ENCODE measurements at regions of chr19 and their contacts with region 1.

Region 1: GRCh38 chr19:34974646-34975045 is 10.6 kb upstream of the ZNF792 start:
- DNase-seq: no peak
- ATAC-seq: no peak
- H3K4me3 ChIP-seq: no peak overlapping the region
- H3K4me3 Mint-ChIP-seq: peak overlapping the region in 4 of 10 donors; percentile 29 to 91 (median 38)
- H3K27ac ChIP-seq: no peak overlapping the region
- H3K27ac Mint-ChIP-seq: peak overlapping the region in 4 of 9 donors; percentile 23 to 86 (median 78)
- H3K4me1 ChIP-seq: peaks cover 8 to 9% of the 10 kb centered on the region in 2 donors
- H3K4me1 Mint-ChIP-seq: peaks cover 11 to 35% (median 26%) of the 10 kb centered on the region in 7 donors
- H3K27me3 ChIP-seq: no peaks in the 10 kb centered on the region
- H3K27me3 Mint-ChIP-seq: peaks cover 0 to 7% (median 0%) of the 10 kb centered on the region in 5 donors

Region 2: DNA sequence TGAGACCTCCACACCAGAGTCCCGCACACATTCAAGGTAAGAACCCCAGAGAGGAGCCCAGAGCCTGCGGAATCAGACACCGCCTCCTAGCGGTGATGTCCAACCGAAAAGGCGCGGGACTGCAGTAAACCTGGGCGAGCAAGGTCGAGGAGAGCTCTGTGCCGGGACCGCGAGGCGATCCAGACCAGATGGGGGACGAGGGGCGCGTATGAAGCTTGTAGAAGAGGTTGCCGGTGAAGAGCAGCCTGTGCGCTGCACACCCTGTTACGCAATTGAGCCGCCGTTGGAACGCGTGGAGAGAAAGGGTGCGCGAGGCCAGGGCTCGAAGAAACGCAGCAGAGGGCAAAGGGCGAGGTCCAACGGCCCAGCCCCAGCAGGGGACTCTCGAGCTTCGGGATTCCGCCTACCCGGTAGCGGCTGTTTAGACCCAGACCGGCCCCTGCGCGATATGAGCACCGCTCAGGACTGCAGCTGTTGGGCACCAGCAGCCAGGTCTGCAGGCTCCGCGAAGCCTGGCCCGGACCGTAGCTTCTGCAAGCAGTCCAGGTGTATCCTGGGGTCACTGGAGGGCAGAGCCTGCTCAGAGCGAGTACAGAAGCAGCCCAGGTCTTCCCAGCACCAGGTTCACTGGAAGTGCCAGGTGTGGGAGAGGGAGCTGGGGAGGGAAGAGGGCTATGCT is 135.8 kb before region 1 on chr19:
- CTCF ChIA-PET with region 1: interaction called, 3 read pairs
- POLR2A ChIA-PET with region 1: interaction called, 3 read pairs
- intact Hi-C with region 1: loop called in 1 of 2 experiments (anchors 1 kb)
- DNase-seq: peak in 5 of 9 donors; percentile 18 to 44 (median 37)
- ATAC-seq: peak; percentile 55
- H3K4me3 ChIP-seq: no peak overlapping the region
- H3K4me3 Mint-ChIP-seq: peak overlapping the region; percentile 5 to 78 (median 66)
- H3K27ac ChIP-seq: peak overlapping the region; percentile 17
- H3K27ac Mint-ChIP-seq: peak overlapping the region in 7 of 9 donors; percentile 13 to 82 (median 53)
- H3K4me1 ChIP-seq: no peaks in the 10 kb centered on the region
- H3K4me1 Mint-ChIP-seq: peaks cover 6 to 33% (median 23%) of the 10 kb centered on the region in 7 donors
- H3K27me3 ChIP-seq: peaks cover 0 to 3% of the 10 kb centered on the region in 2 donors
- H3K27me3 Mint-ChIP-seq: peaks cover 0 to 17% (median 0%) of the 10 kb centered on the region in 5 donors

Region 3: DNA sequence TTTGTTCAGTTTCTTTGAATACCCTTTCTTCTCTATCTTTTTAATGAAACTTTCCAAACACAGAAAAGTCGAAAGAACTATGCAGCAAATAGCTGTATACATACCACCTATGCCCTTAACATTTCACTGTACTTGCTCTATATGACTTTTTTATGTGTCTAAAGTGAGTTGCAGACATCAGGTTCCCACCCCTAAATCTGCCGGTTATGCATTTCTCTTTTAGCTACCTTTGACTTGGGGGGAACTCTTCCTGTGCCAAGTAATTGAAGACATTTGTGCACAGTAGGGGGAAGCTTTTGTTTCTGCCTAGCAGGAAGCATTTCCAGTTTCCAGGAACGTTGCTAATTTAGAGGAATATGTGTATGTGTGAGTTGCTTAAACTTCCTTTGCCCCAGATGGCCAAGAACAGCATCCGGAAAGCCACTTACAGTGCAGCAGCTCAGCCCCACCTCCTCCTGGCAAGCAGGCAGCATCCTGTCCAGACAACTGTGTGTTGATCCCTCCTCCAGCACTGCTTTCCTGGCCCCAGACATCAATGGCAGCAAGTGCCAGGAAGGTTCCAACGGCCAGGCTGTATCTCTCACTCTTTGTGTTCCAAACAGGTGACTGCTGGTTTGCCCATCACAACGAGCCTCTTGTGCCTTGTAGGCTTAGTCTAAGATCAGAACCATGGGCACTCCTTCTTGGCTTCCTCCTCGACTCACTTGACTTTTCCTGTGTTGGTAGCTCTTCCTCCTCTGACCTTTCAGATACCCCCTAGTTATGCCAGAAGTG is 10.8 kb after region 1 on chr19:
- CTCF ChIA-PET with region 1: interaction called, 10 read pairs
- POLR2A ChIA-PET with region 1: interaction called, 7 read pairs
- intact Hi-C with region 1: loop called in 1 of 2 experiments (anchors 1 kb)
- DNase-seq: peak in 3 of 9 donors; percentile 28 to 38 (median 29)
- ATAC-seq: peak; percentile 44
- H3K4me3 ChIP-seq: no peak overlapping the region
- H3K4me3 Mint-ChIP-seq: peak overlapping the region; percentile 13 to 82 (median 70)
- H3K27ac ChIP-seq: peak overlapping the region; percentile 29
- H3K27ac Mint-ChIP-seq: peak overlapping the region; percentile 45 to 92 (median 89)
- H3K4me1 ChIP-seq: peaks cover 7 to 12% of the 10 kb centered on the region in 2 donors
- H3K4me1 Mint-ChIP-seq: peaks cover 14 to 48% (median 21%) of the 10 kb centered on the region in 7 donors
- H3K27me3 ChIP-seq: no peaks in the 10 kb centered on the region
- H3K27me3 Mint-ChIP-seq: no peaks in the 10 kb centered on the region

Region 4: DNA sequence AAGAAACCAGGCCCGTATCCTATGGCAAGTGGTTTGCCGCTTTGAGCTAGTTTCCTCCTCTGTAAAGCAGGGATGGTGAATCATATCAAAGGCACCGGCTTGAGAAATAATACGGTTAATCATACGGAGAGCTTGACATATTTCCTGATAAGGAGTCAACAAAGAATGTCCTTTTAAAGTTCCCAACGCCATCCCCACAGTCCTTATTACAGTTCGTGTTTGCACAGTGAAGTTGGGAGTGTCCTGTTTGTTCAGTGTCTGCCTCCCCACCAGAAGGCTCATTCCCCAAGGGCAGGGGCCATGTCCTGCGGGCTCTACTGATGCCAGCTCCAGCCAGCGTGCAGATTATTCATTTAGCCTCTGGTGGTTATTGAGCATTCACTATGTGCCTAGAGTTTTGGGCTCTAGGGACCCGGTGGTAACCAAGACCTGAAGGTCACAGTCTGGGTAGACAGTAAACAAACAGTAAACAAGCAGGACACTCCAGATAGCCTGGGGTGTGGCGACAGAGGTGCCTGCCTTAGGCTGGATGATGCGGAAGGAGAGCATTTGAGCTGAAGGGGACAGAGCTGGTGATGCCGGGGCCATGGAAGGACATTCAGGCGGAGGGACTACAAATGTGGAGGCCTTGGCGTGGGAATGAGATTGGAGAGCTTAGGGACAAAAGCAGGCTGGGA is 31.8 kb after region 1 on chr19:
- CTCF ChIA-PET with region 1: interaction called, 138 read pairs
- POLR2A ChIA-PET with region 1: interaction called, 134 read pairs
- intact Hi-C with region 1: loop called (anchors 1 to 2 kb)
- DNase-seq: no peak
- ATAC-seq: no peak
- H3K4me3 ChIP-seq: no peak overlapping the region
- H3K4me3 Mint-ChIP-seq: peak overlapping the region in 2 of 10 donors; percentile 47 to 69
- H3K27ac ChIP-seq: peak overlapping the region; percentile 56
- H3K27ac Mint-ChIP-seq: peak overlapping the region; percentile 11 to 93 (median 75)
- H3K4me1 ChIP-seq: peaks cover 39% of the 10 kb centered on the region in 2 donors
- H3K4me1 Mint-ChIP-seq: peaks cover 42 to 77% (median 65%) of the 10 kb centered on the region in 7 donors
- H3K27me3 ChIP-seq: no peaks in the 10 kb centered on the region
- H3K27me3 Mint-ChIP-seq: no peaks in the 10 kb centered on the region

Region 5: DNA sequence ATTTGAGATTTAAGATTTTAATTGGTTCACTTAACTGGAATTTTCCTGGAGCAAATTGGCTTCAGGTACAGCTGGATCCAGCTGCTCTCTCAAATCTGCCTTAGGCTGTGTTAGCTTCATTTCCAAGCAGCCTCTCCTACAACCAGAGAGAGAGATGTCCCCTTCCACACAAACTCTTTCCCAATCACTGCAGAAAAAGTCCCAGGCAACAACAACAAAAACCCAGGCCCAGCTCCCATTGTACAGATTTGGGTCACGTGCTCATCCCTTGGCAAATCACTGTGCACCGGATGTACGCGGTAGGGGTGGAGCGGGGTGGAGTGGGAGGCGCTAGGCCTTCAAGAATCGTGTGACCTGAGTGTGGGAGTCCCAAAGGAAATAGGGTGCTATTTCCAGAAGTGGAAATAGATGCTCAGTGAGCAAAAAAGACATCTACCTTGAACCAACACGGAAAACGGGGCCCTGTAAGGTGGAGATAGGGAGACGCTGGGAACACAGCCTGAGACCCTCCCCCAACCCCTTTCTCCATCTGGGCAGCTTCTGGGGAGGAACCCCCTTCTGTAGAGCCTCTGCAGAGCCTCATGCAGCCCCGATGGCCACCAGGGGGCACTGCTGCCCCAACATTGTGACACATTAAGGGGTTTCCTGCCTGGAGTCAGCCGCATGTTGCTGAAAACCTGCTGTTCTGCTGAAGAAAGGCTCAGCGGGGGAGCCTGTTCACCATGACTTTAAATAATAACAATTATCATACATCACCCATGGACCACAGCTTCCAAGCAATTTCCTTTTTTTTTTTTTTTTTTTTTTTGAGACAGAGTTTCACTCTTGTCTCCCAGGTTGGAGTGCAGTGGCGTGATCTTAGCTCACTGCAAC is 92.3 kb after region 1 on chr19:
- CTCF ChIA-PET with region 1: interaction called, 5 read pairs
- POLR2A ChIA-PET with region 1: no interaction called
- intact Hi-C with region 1: loop called in 1 of 2 experiments (anchors 1 kb)
- DNase-seq: peak; percentile 74 to 91 (median 87)
- ATAC-seq: peak; percentile 95
- H3K4me3 ChIP-seq: no peak overlapping the region
- H3K4me3 Mint-ChIP-seq: peak overlapping the region in 2 of 10 donors; percentile 3 to 24
- H3K27ac ChIP-seq: no peak overlapping the region
- H3K27ac Mint-ChIP-seq: peak overlapping the region in 6 of 9 donors; percentile 8 to 80 (median 49)
- H3K4me1 ChIP-seq: no peaks in the 10 kb centered on the region
- H3K4me1 Mint-ChIP-seq: peaks cover 0 to 13% (median 7%) of the 10 kb centered on the region in 7 donors
- H3K27me3 ChIP-seq: no peaks in the 10 kb centered on the region
- H3K27me3 Mint-ChIP-seq: no peaks in the 10 kb centered on the region

Region 6: DNA sequence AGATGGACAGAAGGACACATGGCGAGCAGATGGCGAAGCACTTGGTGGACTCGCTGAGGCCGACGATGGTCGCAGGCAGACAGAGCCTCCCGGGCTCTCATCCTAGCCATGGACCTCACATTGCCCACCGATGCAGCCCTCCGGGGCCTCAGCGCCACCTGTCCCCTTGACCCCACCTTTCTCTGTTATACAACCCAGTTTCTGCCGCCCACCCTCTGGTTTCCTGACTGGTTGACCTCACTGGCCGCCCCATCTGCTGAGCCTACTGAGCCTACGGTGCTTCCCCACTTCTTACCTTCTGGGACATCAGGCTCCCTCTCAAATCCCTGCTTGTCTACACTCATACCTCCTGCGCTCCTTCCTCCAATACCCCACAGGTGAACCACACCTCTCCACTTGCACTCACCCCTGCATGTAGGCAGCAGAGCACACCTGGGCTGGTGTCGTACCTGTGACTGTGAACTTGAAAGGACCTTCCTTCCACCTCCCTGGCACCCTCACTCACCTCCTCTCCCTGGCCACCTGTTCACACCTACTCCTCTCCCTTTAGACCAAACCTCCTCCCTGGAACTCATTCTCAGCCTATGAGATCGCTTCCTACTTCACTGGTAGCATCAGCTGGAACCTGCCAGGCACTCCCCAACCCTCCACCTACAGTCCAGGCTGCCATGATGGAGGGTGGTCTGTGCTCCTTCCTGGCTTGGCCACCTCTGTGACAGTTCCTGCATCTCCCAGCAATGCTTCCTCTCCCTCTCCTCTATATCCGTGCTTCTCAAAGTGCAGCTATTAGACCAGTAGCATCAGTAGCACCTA is 103.0 kb after region 1 on chr19:
- CTCF ChIA-PET with region 1: no interaction called
- POLR2A ChIA-PET with region 1: no interaction called
- intact Hi-C with region 1: no loop called
- DNase-seq: no peak
- ATAC-seq: no peak
- H3K4me3 ChIP-seq: no peak overlapping the region
- H3K4me3 Mint-ChIP-seq: no peak overlapping the region
- H3K27ac ChIP-seq: no peak overlapping the region
- H3K27ac Mint-ChIP-seq: peak overlapping the region in 2 of 9 donors; percentile 56 to 58
- H3K4me1 ChIP-seq: no peaks in the 10 kb centered on the region
- H3K4me1 Mint-ChIP-seq: peaks cover 0 to 3% (median 0%) of the 10 kb centered on the region in 7 donors
- H3K27me3 ChIP-seq: no peaks in the 10 kb centered on the region
- H3K27me3 Mint-ChIP-seq: peaks cover 0 to 4% (median 2%) of the 10 kb centered on the region in 5 donors